ENCODE measurements at regions of chr1 and their contacts with region 1.

Region 1: GRCh38 chr1:180515864-180516388 is 13.5 kb upstream of the ACBD6 start:
- DNase-seq: peak; percentile 10 to 76 (median 51)
- ATAC-seq: peak; percentile 95
- H3K4me3 ChIP-seq: no peak overlapping the region
- H3K4me3 Mint-ChIP-seq: no peak overlapping the region
- H3K27ac ChIP-seq: no peak overlapping the region
- H3K27ac Mint-ChIP-seq: no peak overlapping the region
- H3K4me1 ChIP-seq: no peaks in the 10 kb centered on the region
- H3K4me1 Mint-ChIP-seq: peaks cover 2% of the 10 kb centered on the region
- H3K27me3 ChIP-seq: no peaks in the 10 kb centered on the region
- H3K27me3 Mint-ChIP-seq: peaks cover 15% of the 10 kb centered on the region
- CTCF ChIP-seq: peak; percentile 93

Region 2: GRCh38 chr1:180027949-180028445 is 487.9 kb before region 1 on chr1:
- CTCF ChIA-PET with region 1: no interaction called
- POLR2A ChIA-PET with region 1: no interaction called
- intact Hi-C with region 1: no loop called
- DNase-seq: no peak
- ATAC-seq: no peak
- H3K4me3 ChIP-seq: no peak overlapping the region
- H3K4me3 Mint-ChIP-seq: no peak overlapping the region
- H3K27ac ChIP-seq: no peak overlapping the region
- H3K27ac Mint-ChIP-seq: no peak overlapping the region
- H3K4me1 ChIP-seq: no peaks in the 10 kb centered on the region
- H3K4me1 Mint-ChIP-seq: peaks cover 2% of the 10 kb centered on the region
- H3K27me3 ChIP-seq: no peaks in the 10 kb centered on the region
- H3K27me3 Mint-ChIP-seq: no peaks in the 10 kb centered on the region
- CTCF ChIP-seq: no peak

Region 3: DNA sequence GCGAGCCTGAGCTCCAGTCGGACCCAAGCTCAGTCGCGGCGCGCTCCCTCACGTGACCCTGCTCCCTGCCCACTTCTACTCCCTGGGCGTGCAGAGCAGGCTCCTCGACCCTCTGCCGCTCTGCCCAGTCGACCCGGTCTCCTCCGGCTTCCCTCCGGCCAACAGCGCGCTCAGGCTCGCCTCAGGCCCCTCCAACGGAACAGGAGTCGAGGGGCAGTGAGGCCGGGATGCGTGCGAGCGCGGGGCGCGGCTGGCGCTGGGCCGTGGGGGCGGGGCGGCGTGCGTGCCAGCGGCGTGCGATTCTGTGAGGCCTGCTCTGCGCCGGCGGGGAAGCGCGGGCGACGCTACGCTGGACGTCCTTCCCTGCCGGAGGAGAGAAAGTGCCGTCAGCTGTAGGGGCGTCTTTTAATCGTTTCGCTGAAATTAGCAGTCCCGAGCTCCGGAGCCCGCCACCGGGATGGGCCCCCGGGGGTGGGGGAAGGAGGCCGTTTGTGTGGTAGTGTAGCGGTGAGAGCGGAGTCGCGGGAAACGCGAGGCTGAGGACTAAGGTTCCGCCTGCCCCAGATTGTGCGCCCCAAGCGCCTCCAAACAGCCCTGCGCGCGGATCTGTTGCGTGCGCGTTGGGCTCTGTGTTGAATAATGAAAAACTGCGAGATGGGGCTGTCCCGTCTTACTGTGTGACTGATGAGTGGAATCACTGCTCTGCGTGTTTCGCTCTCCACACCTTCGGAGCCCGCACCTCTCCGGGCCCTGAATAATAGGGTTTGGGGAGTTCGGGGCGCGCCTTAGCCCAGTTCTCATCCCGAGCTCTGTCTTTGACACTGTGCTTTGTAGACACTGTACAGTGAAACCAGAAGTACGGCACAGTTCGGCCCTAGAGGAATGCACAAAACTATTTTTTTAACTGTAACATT is 13.3 kb before region 1 on chr1 and contains the start of gene ACBD6:
- CTCF ChIA-PET with region 1: interaction called, 59 read pairs
- POLR2A ChIA-PET with region 1: interaction called, 5 read pairs
- intact Hi-C with region 1: no loop called
- DNase-seq: peak; percentile 73 to 92 (median 84)
- ATAC-seq: peak; percentile 89
- H3K4me3 ChIP-seq: peak within 1 kb of the TSS; percentile 96 to 97
- H3K4me3 Mint-ChIP-seq: peak within 1 kb of the TSS; percentile 96
- H3K27ac ChIP-seq: peak within 1 kb of the TSS; percentile 75 to 76
- H3K27ac Mint-ChIP-seq: peak within 1 kb of the TSS; percentile 98
- H3K4me1 ChIP-seq: peaks cover 27% of the 10 kb centered on the region
- H3K4me1 Mint-ChIP-seq: peaks cover 47% of the 10 kb centered on the region
- H3K27me3 ChIP-seq: no peaks in the 10 kb centered on the region
- H3K27me3 Mint-ChIP-seq: no peaks in the 10 kb centered on the region
- CTCF ChIP-seq: no peak
- total RNA-seq, gene ACBD6: 23.4 to 24.6 TPM

Region 4: GRCh38 chr1:180527101-180527669 is 11.3 kb after region 1 on chr1:
- CTCF ChIA-PET with region 1: interaction called, 17 read pairs
- POLR2A ChIA-PET with region 1: no interaction called
- intact Hi-C with region 1: no loop called
- DNase-seq: no peak
- ATAC-seq: no peak
- H3K4me3 ChIP-seq: no peak overlapping the region
- H3K4me3 Mint-ChIP-seq: no peak overlapping the region
- H3K27ac ChIP-seq: no peak overlapping the region
- H3K27ac Mint-ChIP-seq: no peak overlapping the region
- H3K4me1 ChIP-seq: no peaks in the 10 kb centered on the region
- H3K4me1 Mint-ChIP-seq: no peaks in the 10 kb centered on the region
- H3K27me3 ChIP-seq: no peaks in the 10 kb centered on the region
- H3K27me3 Mint-ChIP-seq: no peaks in the 10 kb centered on the region
- CTCF ChIP-seq: no peak

Region 5: GRCh38 chr1:180533266-180533987 is 17.5 kb after region 1 on chr1:
- CTCF ChIA-PET with region 1: interaction called, 17 read pairs
- POLR2A ChIA-PET with region 1: no interaction called
- intact Hi-C with region 1: no loop called
- DNase-seq: peak; percentile 13 to 71 (median 60)
- ATAC-seq: peak; percentile 71
- H3K4me3 ChIP-seq: no peak overlapping the region
- H3K4me3 Mint-ChIP-seq: no peak overlapping the region
- H3K27ac ChIP-seq: no peak overlapping the region
- H3K27ac Mint-ChIP-seq: no peak overlapping the region
- H3K4me1 ChIP-seq: no peaks in the 10 kb centered on the region
- H3K4me1 Mint-ChIP-seq: no peaks in the 10 kb centered on the region
- H3K27me3 ChIP-seq: no peaks in the 10 kb centered on the region
- H3K27me3 Mint-ChIP-seq: peaks cover 7% of the 10 kb centered on the region
- CTCF ChIP-seq: peak; percentile 59

Region 6: GRCh38 chr1:180863158-180863775 is 347.3 kb after region 1 on chr1:
- CTCF ChIA-PET with region 1: interaction called, 150 read pairs
- POLR2A ChIA-PET with region 1: no interaction called
- intact Hi-C with region 1: loop called (anchors 1 to 2 kb)
- DNase-seq: peak in 4 of 9 experiments; percentile 11 to 63 (median 42)
- ATAC-seq: no peak
- H3K4me3 ChIP-seq: no peak overlapping the region
- H3K4me3 Mint-ChIP-seq: no peak overlapping the region
- H3K27ac ChIP-seq: no peak overlapping the region
- H3K27ac Mint-ChIP-seq: no peak overlapping the region
- H3K4me1 ChIP-seq: no peaks in the 10 kb centered on the region
- H3K4me1 Mint-ChIP-seq: no peaks in the 10 kb centered on the region
- H3K27me3 ChIP-seq: no peaks in the 10 kb centered on the region
- H3K27me3 Mint-ChIP-seq: no peaks in the 10 kb centered on the region
- CTCF ChIP-seq: peak; percentile 93

Region 7: DNA sequence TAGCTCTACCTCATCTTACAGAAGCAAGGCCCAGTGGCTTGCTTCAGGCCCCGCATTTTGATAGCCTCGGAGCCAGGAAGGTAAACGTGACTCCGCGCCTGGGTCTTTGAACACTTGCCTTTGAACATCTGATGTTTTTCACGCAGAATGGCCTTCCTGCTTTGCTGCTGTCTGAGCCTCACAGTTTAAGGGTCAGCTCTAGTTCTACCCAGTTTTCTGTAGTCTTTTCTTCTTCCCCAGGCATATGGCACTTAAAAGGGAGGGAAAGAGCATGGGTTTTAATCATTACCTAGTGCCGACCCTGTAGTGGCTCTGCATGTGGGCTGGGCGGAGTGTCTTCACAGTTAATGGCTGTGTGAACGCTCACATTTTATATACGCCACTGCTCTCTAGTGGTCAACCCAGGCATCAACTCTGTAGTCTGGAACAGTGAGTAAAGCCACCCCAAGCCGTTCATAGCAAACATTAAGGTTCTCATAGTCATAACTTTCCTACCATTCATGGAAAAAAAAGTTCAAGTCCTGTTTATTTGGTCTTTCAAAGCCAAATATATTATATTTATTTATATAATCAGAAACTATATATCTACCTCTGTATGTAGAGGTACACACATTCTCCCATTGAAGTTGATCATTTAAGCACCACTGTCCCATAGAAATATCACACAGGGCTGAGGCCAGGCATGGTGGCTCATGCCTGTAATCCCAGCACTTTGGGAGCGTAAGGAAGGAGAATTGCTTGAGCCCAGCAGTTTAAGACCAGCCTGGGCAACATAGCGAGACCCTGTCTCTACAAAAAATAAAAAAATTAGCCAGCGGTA is 650.7 kb after region 1 on chr1:
- CTCF ChIA-PET with region 1: interaction called, 5 read pairs
- POLR2A ChIA-PET with region 1: no interaction called
- intact Hi-C with region 1: loop called (anchors 1 kb)
- DNase-seq: peak; percentile 51 to 87 (median 75)
- ATAC-seq: peak; percentile 99
- H3K4me3 ChIP-seq: peak overlapping the region; percentile 6 to 28
- H3K4me3 Mint-ChIP-seq: peak overlapping the region; percentile 73
- H3K27ac ChIP-seq: no peak overlapping the region
- H3K27ac Mint-ChIP-seq: no peak overlapping the region
- H3K4me1 ChIP-seq: peaks cover 5% of the 10 kb centered on the region
- H3K4me1 Mint-ChIP-seq: peaks cover 7% of the 10 kb centered on the region
- H3K27me3 ChIP-seq: no peaks in the 10 kb centered on the region
- H3K27me3 Mint-ChIP-seq: no peaks in the 10 kb centered on the region
- CTCF ChIP-seq: peak; percentile 93